ENCODE measurements at regions of chr18 and their contacts with region 1.

Region 1: DNA sequence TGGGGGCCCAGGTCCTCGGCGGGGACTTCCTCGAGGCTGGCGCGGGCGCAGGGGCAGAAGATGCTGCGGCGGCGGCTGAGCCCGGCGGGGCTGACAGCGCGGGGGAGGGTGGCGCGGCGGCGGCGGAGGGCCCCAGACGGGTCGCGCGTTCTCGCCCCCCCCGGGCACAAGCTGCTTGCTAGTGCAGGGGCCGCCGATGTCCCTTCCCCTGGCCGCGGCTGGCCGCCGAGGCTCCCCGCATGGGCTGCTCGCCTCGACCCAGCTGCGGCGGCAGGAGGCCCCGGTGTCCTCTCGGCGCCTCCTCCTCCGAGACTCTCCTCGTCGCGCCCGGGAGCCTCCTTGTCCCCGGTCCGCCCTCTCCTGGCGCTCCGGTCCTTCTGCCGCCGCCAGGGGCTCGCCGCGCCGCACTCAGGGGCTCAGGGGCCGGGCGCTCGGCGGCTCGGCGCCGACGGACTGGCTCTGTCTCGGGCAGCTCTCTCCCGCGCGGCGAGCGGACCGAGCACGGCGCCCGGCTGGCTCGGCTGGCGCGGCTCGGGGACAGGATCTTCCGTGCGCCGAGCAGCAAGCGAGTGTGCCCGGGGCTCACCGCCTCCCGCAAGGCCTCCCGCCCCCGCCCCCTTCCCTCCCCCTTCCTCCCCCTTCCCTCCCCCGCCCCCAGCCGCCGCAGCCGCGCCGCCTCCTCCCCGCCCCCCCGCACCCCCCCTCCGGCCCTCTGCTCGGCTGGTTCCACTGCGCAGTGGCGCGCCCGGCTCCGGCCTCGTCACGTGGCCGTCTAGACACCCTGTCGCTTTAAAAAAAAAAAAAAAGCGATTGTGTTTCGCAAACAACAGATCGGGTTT is 902 bp upstream of the SMAD7 start:
- DNase-seq: peak; percentile 71 to 86 (median 75)
- H3K4me3 ChIP-seq: peak overlapping the region; percentile 52 to 64
- H3K4me3 Mint-ChIP-seq: peak overlapping the region; percentile 93 to 99 (median 96)
- H3K27ac ChIP-seq: peak overlapping the region; percentile 74
- H3K27ac Mint-ChIP-seq: peak overlapping the region; percentile 95 to 100 (median 98)
- H3K4me1 ChIP-seq: peaks cover 56% of the 10 kb centered on the region
- H3K4me1 Mint-ChIP-seq: peaks cover 38 to 74% (median 42%) of the 10 kb centered on the region in 4 donors
- H3K27me3 ChIP-seq: no peaks in the 10 kb centered on the region
- H3K27me3 Mint-ChIP-seq: no peaks in the 10 kb centered on the region

Region 2: DNA sequence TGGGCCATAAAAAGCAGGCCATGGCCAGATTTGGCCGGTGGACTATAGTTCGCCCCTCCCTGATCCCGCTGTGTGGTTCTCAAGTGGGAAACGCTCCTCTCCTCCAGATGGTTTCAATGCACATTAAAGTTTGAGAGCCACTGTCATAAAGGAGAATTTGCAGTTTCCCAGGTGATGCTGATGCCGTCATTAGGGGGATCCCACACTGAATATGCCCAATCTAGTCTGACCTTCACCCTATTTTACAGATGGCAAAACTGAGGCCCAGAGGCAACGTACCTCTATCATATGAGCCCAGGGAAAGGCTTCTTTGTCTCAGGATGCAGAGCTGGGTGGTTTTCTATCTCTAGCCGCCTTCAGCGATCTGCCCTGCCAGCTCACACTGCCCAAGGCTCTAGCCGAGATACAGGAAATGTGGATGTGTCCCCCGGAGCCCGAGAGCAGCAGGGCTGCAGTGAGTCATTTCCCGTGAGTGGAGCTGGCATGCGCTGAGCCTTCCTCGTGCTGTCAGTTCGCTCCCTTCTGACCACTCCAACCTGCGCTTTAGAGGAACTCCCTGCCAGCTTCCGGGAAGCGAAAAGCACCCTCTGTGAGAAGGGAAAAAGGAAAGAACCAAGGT is 117.1 kb before region 1 on chr18:
- CTCF ChIA-PET with region 1: interaction called, 3 read pairs
- POLR2A ChIA-PET with region 1: interaction called, 44 read pairs
- intact Hi-C with region 1: loop called (anchors 1 kb)
- DNase-seq: peak; percentile 58 to 90 (median 62)
- H3K4me3 ChIP-seq: peak overlapping the region; percentile 42 to 54
- H3K4me3 Mint-ChIP-seq: peak overlapping the region; percentile 81 to 98 (median 90)
- H3K27ac ChIP-seq: peak overlapping the region; percentile 74
- H3K27ac Mint-ChIP-seq: peak overlapping the region; percentile 90 to 97 (median 96)
- H3K4me1 ChIP-seq: peaks cover 100% of the 10 kb centered on the region
- H3K4me1 Mint-ChIP-seq: peaks cover 59 to 100% (median 79%) of the 10 kb centered on the region in 4 donors
- H3K27me3 ChIP-seq: no peaks in the 10 kb centered on the region
- H3K27me3 Mint-ChIP-seq: no peaks in the 10 kb centered on the region

Region 3: DNA sequence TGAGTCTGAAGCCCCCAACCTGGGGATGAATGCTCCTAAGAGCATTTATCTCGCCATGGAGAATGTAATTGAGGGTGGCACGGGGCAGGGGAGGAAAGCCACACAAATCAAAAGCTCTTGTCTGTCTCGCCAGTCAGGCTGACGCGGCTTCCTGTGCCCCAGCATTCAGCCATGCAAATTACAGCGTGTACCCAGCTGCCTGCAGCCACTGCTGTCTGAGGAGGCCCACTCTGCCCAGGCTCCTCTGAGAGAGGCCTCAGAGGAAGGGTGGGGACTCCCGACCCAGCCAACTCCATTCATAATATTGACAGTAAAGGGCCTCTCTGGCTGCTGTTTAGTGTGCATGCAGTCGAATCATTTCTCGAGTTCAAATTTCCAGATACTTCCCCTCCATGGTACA is 22.9 kb before region 1 on chr18:
- CTCF ChIA-PET with region 1: interaction called, 4 read pairs
- POLR2A ChIA-PET with region 1: interaction called, 118 read pairs
- intact Hi-C with region 1: loop called (anchors 2 kb)
- DNase-seq: peak; percentile 72 to 89 (median 76)
- H3K4me3 ChIP-seq: peak overlapping the region; percentile 13 to 15
- H3K4me3 Mint-ChIP-seq: peak overlapping the region; percentile 50 to 94 (median 74)
- H3K27ac ChIP-seq: peak overlapping the region; percentile 3
- H3K27ac Mint-ChIP-seq: peak overlapping the region; percentile 86 to 97 (median 95)
- H3K4me1 ChIP-seq: peaks cover 97% of the 10 kb centered on the region
- H3K4me1 Mint-ChIP-seq: peaks cover 66 to 99% (median 84%) of the 10 kb centered on the region in 4 donors
- H3K27me3 ChIP-seq: no peaks in the 10 kb centered on the region
- H3K27me3 Mint-ChIP-seq: peaks cover 0 to 1% of the 10 kb centered on the region in 2 donors

Region 4: GRCh38 chr18:48997985-48998831 is 46.5 kb after region 1 on chr18:
- CTCF ChIA-PET with region 1: interaction called, 3 read pairs
- POLR2A ChIA-PET with region 1: interaction called, 10 read pairs
- intact Hi-C with region 1: loop called (anchors 1 kb)
- DNase-seq: no peak
- H3K4me3 ChIP-seq: no peak overlapping the region
- H3K4me3 Mint-ChIP-seq: peak overlapping the region in 1 of 8 donors; percentile 69
- H3K27ac ChIP-seq: no peak overlapping the region
- H3K27ac Mint-ChIP-seq: peak overlapping the region; percentile 78 to 97 (median 97)
- H3K4me1 ChIP-seq: peaks cover 26% of the 10 kb centered on the region
- H3K4me1 Mint-ChIP-seq: peaks cover 11 to 27% (median 18%) of the 10 kb centered on the region in 4 donors
- H3K27me3 ChIP-seq: no peaks in the 10 kb centered on the region
- H3K27me3 Mint-ChIP-seq: no peaks in the 10 kb centered on the region

Region 5: GRCh38 chr18:49486953-49487710 is 535.5 kb after region 1 on chr18 and contains the start of gene C18orf32:
- CTCF ChIA-PET with region 1: no interaction called
- POLR2A ChIA-PET with region 1: interaction called, 5 read pairs
- intact Hi-C with region 1: loop called (anchors 5 kb)
- DNase-seq: peak; percentile 93 to 97 (median 94)
- H3K4me3 ChIP-seq: peak within 1 kb of the TSS; percentile 66 to 71
- H3K4me3 Mint-ChIP-seq: peak within 1 kb of the TSS; percentile 91 to 99 (median 96)
- H3K27ac ChIP-seq: peak within 1 kb of the TSS; percentile 81
- H3K27ac Mint-ChIP-seq: peak within 1 kb of the TSS; percentile 93 to 100 (median 98)
- H3K4me1 ChIP-seq: peaks cover 66% of the 10 kb centered on the region
- H3K4me1 Mint-ChIP-seq: peaks cover 49 to 82% (median 63%) of the 10 kb centered on the region in 4 donors
- H3K27me3 ChIP-seq: no peaks in the 10 kb centered on the region
- H3K27me3 Mint-ChIP-seq: no peaks in the 10 kb centered on the region
- total RNA-seq, gene C18orf32: 48.7 to 55.3 TPM

Measured in CD4-positive, alpha-beta memory T cell (primary cell).